ENCODE measurements at regions of chr3 and their contacts with region 1.

Region 1: DNA sequence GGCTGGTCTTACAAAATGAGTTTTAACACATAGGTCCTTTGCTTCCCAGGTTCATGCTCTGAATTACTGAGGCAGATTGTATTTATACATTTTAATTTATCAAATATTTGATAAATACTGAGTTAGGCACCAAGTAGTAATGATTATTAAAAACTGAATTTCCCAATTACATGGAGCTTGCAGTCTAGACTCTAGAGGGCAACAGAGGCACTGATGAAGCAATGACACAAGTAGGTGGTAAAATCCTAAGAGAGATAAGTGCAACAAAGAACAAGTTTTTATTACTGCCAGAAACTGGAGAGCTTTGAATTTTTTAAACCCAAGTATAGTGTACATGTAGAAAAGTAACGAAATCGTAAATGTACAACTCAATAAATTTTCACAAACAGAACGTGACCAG is 406.2 kb upstream of the RARB start:
- DNase-seq: no peak

Region 2: DNA sequence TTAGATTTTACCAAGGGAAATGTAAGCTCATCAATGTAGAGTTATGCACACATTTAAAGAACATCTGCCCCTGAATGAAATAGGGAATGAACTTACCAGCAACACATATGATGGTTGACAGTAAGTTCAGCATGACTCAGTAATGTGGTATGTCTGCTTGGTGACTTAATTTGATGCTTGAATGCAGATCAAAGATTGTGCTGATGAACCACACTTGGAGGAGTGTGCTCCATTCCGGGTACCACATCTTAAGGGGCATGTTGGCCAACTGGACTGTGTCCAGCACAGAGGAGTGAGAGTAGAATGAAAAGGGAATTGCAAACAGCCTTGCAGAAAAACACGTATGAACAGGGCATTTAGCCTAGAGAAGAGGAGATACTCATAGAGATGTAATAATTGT is 235.2 kb after region 1 on chr3:
- intact Hi-C with region 1: loop called in 1 of 2 experiments (anchors 10 kb)
- DNase-seq: no peak

Measured in posterior vena cava (tissue), 2 donors.